ENCODE measurements at regions of chr9 and their contacts with region 1.

Region 1: GRCh38 chr9:4366591-4367330 is 66.9 kb upstream of the GLIS3 start:
- DNase-seq: peak; percentile 71
- H3K4me3 Mint-ChIP-seq: no peak overlapping the region
- H3K27ac Mint-ChIP-seq: no peak overlapping the region
- H3K4me1 Mint-ChIP-seq: peaks cover 3% of the 10 kb centered on the region
- H3K27me3 Mint-ChIP-seq: peaks cover 11% of the 10 kb centered on the region

Region 2: DNA sequence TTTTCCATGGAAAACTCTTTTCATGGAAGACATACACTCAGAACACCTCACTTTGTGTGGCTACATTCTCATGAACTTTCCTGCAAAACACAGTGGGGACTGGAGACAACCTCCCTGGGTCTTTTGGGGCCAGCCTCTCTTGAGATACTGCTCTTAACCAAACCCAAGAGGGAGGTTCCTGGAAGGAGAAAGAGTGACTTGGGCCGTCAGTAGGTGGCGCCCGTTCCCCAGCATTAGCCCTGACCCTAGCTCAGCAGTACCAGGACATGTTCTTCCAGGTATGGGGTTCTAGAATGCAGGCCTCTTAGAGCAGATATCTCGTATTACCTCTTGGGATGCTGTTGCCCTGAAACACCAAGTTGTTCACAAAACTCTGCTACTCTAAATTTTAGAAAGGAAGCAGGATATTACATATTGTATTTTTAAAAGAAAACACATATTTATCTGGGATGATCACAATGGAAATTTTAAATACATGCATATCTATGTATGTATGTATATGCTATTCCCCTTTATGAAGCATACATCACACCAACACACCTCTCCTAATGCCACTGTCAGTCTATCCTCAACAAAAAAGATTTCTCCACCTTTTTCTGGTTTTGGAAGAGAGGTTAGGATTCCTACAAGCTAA is 51.1 kb before region 1 on chr9:
- intact Hi-C with region 1: loop called (anchors 1 kb)
- DNase-seq: peak; percentile 90
- H3K4me3 Mint-ChIP-seq: no peak overlapping the region
- H3K27ac Mint-ChIP-seq: no peak overlapping the region
- H3K4me1 Mint-ChIP-seq: peaks cover 2% of the 10 kb centered on the region
- H3K27me3 Mint-ChIP-seq: peaks cover 10% of the 10 kb centered on the region